Breast epithelium (tissue), 4 donors: ENCODE measurements at regions of chr6 and their contacts with region 1.

Region 1: GRCh38 chr6:35511562-35511941 is 1.1 kb downstream of the TULP1 start:
- DNase-seq: no peak
- H3K4me3 ChIP-seq: peak overlapping the region in 2 of 3 donors; percentile 40 to 56
- H3K27ac ChIP-seq: no peak overlapping the region
- H3K4me1 ChIP-seq: no peaks in the 10 kb centered on the region
- H3K27me3 ChIP-seq: peaks cover 6 to 28% of the 10 kb centered on the region in 2 donors
- CTCF ChIP-seq: no peak
- POLR2A ChIP-seq: no peak

Region 2: GRCh38 chr6:34189806-34190503 is 1321.6 kb before region 1 on chr6:
- intact Hi-C with region 1: loop called (anchors 5 kb)
- DNase-seq: no peak
- H3K4me3 ChIP-seq: no peak overlapping the region
- H3K27ac ChIP-seq: no peak overlapping the region
- H3K4me1 ChIP-seq: no peaks in the 10 kb centered on the region
- H3K27me3 ChIP-seq: no peaks in the 10 kb centered on the region
- CTCF ChIP-seq: no peak
- POLR2A ChIP-seq: no peak

Region 3: DNA sequence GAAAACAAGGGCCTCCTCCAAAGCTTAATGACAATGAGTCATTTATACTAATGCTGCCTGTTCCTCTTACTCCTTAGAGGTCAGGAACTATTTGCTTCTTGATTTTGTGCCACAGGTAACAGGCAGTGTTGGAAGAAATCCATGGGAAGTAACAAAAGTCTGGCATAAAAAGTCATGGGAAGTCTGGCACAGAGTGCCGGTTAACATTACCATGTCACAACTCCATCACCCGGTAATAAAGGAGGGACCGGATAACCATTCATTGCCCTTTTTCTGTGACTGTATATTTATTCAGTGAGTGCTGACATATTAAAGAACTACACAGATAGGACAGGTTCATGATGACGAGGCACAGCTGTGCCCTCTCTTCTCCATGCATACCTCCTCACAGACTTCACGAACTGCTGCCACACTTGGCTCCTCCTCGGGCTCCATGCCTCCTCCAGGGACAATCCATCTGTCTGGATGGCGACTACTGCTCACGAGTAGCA is 1170.0 kb before region 1 on chr6:
- intact Hi-C with region 1: no loop called
- DNase-seq: peak in 1 of 2 donors; percentile 26
- H3K4me3 ChIP-seq: no peak overlapping the region
- H3K27ac ChIP-seq: peak overlapping the region; percentile 65 to 66
- H3K4me1 ChIP-seq: peaks cover 3 to 24% of the 10 kb centered on the region in 2 donors
- H3K27me3 ChIP-seq: no peaks in the 10 kb centered on the region
- CTCF ChIP-seq: no peak
- POLR2A ChIP-seq: no peak

Region 4: GRCh38 chr6:35544523-35545313 is 33.2 kb after region 1 on chr6:
- intact Hi-C with region 1: no loop called
- DNase-seq: no peak
- H3K4me3 ChIP-seq: no peak overlapping the region
- H3K27ac ChIP-seq: no peak overlapping the region
- H3K4me1 ChIP-seq: no peaks in the 10 kb centered on the region
- H3K27me3 ChIP-seq: no peaks in the 10 kb centered on the region
- CTCF ChIP-seq: no peak
- POLR2A ChIP-seq: no peak